ENCODE measurements at regions of chr1 and their contacts with region 1.

Region 1: DNA sequence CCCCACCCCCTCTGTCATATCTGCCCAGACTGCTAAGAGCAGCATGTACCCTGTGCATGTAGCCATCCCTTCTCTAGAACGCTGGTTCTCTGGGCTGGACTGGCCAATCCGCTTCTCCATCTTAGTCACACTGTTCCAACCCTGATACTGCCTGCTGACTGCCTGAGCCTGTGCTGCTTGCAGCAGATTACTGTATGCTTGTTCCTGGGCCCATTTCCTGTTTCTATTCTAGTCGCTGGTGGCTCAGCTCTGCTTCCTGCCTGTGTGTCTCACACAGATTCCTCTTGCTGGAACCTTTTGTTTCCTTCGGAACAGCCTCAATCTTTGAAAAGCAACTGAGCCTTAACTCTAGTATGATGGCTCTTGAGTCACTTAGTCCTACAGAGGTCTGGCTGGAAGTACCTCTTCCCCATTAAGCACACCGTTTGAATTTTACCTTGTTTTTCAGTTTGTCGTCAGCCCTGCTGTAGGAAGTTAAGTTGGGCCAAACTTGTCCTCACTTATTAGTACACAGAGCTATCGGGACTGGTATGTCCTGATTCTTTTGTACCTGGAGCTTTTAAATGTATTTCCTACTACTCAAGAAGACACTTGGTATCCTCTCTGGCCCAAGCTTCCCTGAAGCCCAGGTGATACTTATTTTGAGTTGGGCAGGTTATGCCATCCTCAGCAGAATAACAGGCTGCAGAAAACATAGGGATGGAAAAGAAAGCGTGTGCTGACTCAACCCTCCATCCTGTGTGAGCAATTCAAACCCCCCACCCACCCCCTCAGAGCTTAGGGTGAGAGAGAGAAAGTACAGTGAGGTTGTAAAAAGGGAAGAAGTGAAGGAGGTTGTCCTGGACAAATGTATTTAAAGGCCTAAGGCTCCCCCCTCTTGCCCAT is 43.4 kb upstream of the PIGV start:
- DNase-seq: peak in 1 of 2 experiments; percentile 59
- H3K4me3 ChIP-seq: no peak overlapping the region
- H3K27ac ChIP-seq: no peak overlapping the region
- H3K4me1 ChIP-seq: peaks cover 0 to 8% (median 2%) of the 10 kb centered on the region in 4 experiments; a peak in 1 of 7 replicates
- H3K27me3 ChIP-seq: no peaks in the 10 kb centered on the region
- CTCF ChIP-seq: no peak
- EP300 ChIP-seq: no peak
- POLR2A ChIP-seq: no peak
- RAD21 ChIP-seq: no peak

Region 2: DNA sequence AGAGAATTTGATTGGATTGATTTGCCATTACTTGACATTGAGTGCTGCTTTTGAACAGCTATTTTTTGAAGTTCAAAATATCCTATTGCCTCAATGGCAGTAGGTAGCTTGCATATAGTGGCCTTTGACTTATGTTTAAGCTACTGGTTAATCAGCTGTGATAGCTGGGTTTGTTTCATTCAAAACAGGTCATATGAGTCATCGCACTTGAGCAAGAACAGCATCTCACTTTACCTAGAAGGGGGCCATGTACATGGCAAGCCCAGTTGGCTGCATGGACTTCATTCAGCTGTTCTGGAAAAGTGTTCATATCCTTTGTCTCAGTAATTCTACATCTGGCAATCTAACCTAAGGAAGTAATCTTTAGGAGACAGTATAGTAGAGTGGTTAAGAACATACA is 77.5 kb before region 1 on chr1:
- CTCF ChIA-PET with region 1: no interaction called
- POLR2A ChIA-PET with region 1: no interaction called
- DNase-seq: no peak
- H3K4me3 ChIP-seq: no peak overlapping the region
- H3K27ac ChIP-seq: no peak overlapping the region
- H3K4me1 ChIP-seq: no peaks in the 10 kb centered on the region
- H3K27me3 ChIP-seq: no peaks in the 10 kb centered on the region
- CTCF ChIP-seq: no peak
- EP300 ChIP-seq: no peak
- POLR2A ChIP-seq: no peak
- RAD21 ChIP-seq: no peak

Region 3: DNA sequence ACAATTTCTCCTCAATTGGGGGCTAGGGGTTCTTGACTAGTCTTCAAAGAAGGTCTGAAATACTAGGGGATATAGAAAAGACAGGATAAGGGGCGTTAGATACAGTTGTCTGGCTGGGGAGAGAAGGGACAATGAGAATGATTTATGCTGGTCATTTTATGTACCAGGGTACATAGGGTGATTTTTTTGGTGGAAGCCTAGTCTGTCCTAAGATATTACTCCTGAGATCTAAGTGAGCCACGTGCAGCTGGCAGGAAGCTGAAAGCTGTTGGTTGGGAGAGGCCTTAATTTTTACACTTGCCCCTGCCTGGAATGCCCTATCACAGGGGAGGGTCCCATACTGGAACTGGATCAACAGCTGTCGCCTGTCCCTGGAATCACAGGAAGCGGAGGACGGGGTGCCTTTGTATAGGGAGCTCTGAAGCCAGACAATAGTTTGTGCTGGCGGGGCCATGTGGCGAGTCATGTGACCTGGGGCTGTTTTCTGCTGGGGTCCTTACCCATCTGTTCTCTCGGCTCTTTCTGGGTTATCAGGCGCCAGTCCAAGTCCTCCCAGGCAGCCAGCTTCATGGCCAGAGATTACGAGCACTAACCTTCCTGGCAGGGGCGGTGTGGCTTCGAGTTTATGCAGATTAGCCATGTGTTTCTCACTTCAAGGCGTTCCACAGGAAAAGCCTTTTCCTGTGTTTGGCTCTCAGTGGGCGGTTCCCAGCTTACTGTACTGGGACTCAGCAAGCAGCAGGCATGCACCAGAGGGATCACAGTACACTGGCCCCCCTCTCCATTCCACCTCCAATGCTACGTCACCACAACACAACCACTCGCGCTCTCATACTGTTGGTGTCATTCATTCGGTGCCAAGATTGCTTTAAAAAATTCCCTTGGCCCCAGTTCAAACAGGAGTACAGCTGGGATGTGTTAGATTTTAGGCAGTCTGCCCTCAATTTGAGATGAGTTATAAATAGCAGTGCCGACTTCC is 21.0 kb before region 1 on chr1:
- CTCF ChIA-PET with region 1: interaction called, 12 read pairs
- POLR2A ChIA-PET with region 1: interaction called, 19 read pairs
- DNase-seq: peak in 1 of 2 experiments; percentile 79
- H3K4me3 ChIP-seq: peak overlapping the region in 3 of 4 experiments; percentile 2 to 42 (median 15); a peak in 5 of 8 replicates
- H3K27ac ChIP-seq: peak overlapping the region; percentile 54
- H3K4me1 ChIP-seq: peaks cover 20 to 42% (median 26%) of the 10 kb centered on the region in 4 experiments
- H3K27me3 ChIP-seq: no peaks in the 10 kb centered on the region
- CTCF ChIP-seq: no peak
- EP300 ChIP-seq: no peak
- POLR2A ChIP-seq: peak in 1 of 2 experiments; percentile 69; a peak in 1 of 3 replicates
- RAD21 ChIP-seq: no peak

Region 4: DNA sequence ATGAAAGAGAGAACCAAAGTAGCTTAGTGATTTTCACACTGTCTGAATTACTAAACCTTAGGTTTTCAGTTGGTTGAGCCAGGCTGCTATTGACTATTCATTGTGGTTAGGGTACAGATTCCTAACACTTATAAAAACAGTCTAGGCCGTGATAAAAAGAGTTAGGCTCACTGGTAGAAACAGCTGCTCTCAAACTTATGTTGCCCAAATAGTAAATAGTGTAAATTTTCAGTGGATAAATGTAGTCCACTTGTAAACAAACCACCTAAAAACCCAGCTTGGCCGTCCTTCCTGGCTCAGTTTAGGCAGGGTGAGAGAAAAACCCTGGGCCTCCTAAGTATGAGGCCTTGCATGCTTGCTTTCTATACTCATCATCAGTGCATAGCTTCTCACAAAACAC is 13.6 kb before region 1 on chr1:
- CTCF ChIA-PET with region 1: interaction called, 12 read pairs
- POLR2A ChIA-PET with region 1: interaction called, 19 read pairs
- DNase-seq: no peak
- H3K4me3 ChIP-seq: no peak overlapping the region
- H3K27ac ChIP-seq: no peak overlapping the region
- H3K4me1 ChIP-seq: peaks cover 7 to 21% (median 14%) of the 10 kb centered on the region in 4 experiments; a peak in 6 of 7 replicates
- H3K27me3 ChIP-seq: no peaks in the 10 kb centered on the region
- CTCF ChIP-seq: no peak
- EP300 ChIP-seq: no peak
- POLR2A ChIP-seq: no peak
- RAD21 ChIP-seq: no peak

Region 5: GRCh38 chr1:26833432-26834405 is 89.4 kb after region 1 on chr1:
- CTCF ChIA-PET with region 1: no interaction called
- POLR2A ChIA-PET with region 1: no interaction called
- DNase-seq: no peak
- H3K4me3 ChIP-seq: no peak overlapping the region
- H3K27ac ChIP-seq: no peak overlapping the region
- H3K4me1 ChIP-seq: no peaks in the 10 kb centered on the region; a peak in 1 of 7 replicates
- H3K27me3 ChIP-seq: no peaks in the 10 kb centered on the region
- CTCF ChIP-seq: no peak
- EP300 ChIP-seq: no peak
- POLR2A ChIP-seq: no peak
- RAD21 ChIP-seq: no peak

Region 6: DNA sequence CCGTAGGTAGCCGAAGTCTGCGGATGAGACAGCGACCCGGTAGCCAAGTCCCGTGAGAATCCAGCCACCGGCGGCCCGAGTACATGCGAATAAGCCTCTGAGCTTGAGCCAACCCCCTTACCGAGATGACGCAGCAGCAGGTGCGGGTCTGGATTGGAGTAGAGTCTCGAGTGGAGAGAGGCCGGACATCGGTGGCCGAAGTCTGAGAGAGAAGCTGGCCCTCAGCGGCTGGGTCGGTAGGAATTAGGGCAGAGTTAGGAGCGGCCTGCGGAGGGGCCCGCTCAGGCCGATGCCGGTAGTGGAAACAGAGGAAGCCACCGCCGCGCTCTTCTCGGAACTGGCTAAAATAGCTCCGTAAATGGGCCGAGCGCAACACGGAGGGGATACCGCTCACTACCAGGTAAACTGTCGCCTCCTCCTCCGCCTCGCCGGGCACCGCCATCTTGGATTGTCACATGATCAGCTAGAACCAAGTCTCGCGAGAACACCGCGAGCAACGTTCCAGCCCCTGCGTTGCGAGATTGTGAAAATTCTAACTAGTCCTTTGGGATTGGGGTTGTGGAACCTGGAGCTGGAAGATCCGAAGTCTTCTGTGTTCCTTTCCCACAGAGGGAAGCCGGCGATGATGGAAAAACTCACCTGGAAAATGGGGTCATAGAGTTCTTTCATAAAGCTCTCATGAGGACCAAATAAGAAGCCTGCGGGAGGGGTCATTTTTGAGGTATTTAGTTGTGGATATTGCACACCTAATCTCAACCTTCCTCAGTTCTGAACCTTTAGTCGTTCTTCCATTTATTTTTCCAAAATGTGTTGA is 155.9 kb after region 1 on chr1 and contains the start of gene GPATCH3:
- CTCF ChIA-PET with region 1: no interaction called
- POLR2A ChIA-PET with region 1: no interaction called
- DNase-seq: peak; percentile 71 to 91
- H3K4me3 ChIP-seq: peak within 1 kb of the TSS; percentile 90 to 98 (median 96)
- H3K27ac ChIP-seq: peak within 1 kb of the TSS; percentile 88
- H3K4me1 ChIP-seq: peaks cover 0 to 8% (median 3%) of the 10 kb centered on the region in 4 experiments; a peak in 3 of 7 replicates
- H3K27me3 ChIP-seq: no peaks in the 10 kb centered on the region
- CTCF ChIP-seq: no peak
- EP300 ChIP-seq: no peak
- POLR2A ChIP-seq: peak; percentile 89 to 98
- RAD21 ChIP-seq: no peak
- total RNA-seq, gene GPATCH3: 17.4 and 19.8 TPM in 2 replicates

Measured in H1 (cell line).